Endothelial cell of umbilical vein (primary cell): ENCODE measurements at regions of chr22 and their contacts with region 1.

Region 1: DNA sequence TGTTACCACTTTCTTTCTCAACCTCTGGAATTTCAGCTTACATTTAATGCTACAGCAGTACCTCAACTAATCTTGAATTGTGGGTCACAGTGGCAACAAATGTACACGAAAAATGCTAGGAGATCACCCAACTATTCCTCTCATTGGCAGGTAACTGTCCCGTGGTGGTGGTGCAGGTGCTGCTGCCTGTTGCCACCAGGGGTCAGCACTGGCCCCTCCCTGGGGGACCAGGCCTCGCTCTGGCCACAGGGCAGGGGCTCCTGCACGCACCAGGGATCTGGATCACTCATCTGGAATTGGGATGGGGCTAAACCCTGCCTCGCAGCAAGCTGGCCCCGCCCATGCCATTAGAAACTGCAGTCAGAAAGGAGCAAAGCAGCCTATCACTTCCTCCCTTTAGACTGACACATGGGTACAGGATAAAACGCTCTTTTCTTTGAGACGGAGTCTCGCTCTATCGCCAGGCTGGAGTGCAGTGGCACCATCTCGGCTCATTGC is 6.9 kb upstream of the POLDIP3 start:
- DNase-seq: peak; percentile 51
- H3K4me3 ChIP-seq: no peak overlapping the region
- H3K27ac ChIP-seq: no peak overlapping the region
- H3K4me1 ChIP-seq: no peaks in the 10 kb centered on the region
- H3K27me3 ChIP-seq: no peaks in the 10 kb centered on the region
- CTCF ChIP-seq: peak; percentile 92 to 94
- POLR2A ChIP-seq: no peak

Region 2: DNA sequence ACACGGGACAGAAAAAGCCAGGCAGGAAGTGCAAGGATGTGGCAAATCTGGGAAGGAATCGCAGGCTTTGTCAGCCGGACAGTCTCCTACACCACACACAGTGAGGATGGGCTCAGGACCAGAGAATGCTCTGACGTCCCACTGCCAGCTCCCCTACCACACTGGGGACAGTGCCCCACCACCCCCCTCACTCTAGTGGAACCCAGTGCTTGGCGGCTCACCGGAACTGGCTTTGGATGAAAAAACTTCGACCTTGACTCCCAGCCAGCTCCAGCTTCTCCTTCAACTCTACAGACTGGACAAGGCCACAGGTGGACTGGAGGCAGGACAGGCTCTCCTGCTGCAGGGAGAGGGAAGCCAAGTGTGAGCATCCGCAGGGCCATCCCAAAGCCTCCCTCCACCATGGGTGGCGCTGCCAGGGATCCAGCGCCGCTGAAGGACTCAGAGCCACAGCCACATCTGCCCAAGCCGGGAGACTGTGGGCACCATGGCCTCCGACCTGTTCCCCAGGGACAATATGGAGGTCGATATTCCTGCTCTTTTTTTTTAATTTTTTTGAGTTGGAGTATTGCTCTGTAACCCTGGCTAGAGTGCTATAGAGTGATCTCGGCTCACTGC is 43.8 kb before region 1 on chr22:
- CTCF ChIA-PET with region 1: no interaction called
- POLR2A ChIA-PET with region 1: no interaction called
- dilution Hi-C with region 1: no loop called
- intact Hi-C with region 1: no loop called
- DNase-seq: no peak
- H3K4me3 ChIP-seq: no peak overlapping the region
- H3K27ac ChIP-seq: no peak overlapping the region
- H3K4me1 ChIP-seq: peaks cover 3% of the 10 kb centered on the region
- H3K27me3 ChIP-seq: no peaks in the 10 kb centered on the region
- CTCF ChIP-seq: no peak
- POLR2A ChIP-seq: no peak

Region 3: DNA sequence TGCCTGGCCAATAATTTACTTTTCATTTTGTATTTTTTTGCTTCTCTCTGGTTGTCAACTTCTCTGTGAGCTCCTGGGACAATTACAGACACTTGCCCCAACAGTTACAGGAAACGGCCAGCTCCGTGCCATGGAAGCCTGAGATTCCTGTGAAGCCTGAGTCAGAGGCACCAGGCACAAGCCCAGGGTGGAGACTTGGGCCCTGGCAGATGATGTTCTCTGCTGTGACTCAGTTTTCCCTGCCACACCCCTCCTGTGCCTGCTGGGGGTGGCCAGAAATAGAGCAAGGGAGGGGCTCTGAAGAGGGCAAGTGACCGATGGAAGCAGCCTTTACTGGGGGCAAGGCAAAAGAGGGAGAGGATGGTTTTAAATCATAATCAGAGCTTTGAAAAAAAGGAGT is 14.0 kb after region 1 on chr22:
- CTCF ChIA-PET with region 1: interaction called, 15 read pairs
- POLR2A ChIA-PET with region 1: no interaction called
- dilution Hi-C with region 1: no loop called
- intact Hi-C with region 1: no loop called
- DNase-seq: peak; percentile 87
- H3K4me3 ChIP-seq: no peak overlapping the region
- H3K27ac ChIP-seq: peak overlapping the region; percentile 74
- H3K4me1 ChIP-seq: peaks cover 12% of the 10 kb centered on the region
- H3K27me3 ChIP-seq: no peaks in the 10 kb centered on the region
- CTCF ChIP-seq: no peak
- POLR2A ChIP-seq: no peak

Region 4: GRCh38 chr22:42649246-42650099 is 27.9 kb after region 1 on chr22 and contains the start of gene CYB5R3:
- CTCF ChIA-PET with region 1: interaction called, 5 read pairs
- POLR2A ChIA-PET with region 1: no interaction called
- dilution Hi-C with region 1: no loop called
- intact Hi-C with region 1: loop called (anchors 1 kb)
- DNase-seq: peak; percentile 81
- H3K4me3 ChIP-seq: peak within 1 kb of the TSS; percentile 5 to 92 (median 42)
- H3K27ac ChIP-seq: peak within 1 kb of the TSS; percentile 75
- H3K4me1 ChIP-seq: peaks cover 37% of the 10 kb centered on the region
- H3K27me3 ChIP-seq: no peaks in the 10 kb centered on the region
- CTCF ChIP-seq: no peak
- POLR2A ChIP-seq: no peak
- total RNA-seq, gene CYB5R3: 217 and 232 TPM in 2 replicates

Region 5: GRCh38 chr22:42820066-42820763 is 198.7 kb after region 1 on chr22:
- CTCF ChIA-PET with region 1: interaction called, 40 read pairs
- POLR2A ChIA-PET with region 1: no interaction called
- dilution Hi-C with region 1: no loop called
- intact Hi-C with region 1: loop called (anchors 1 kb)
- DNase-seq: peak; percentile 63
- H3K4me3 ChIP-seq: no peak overlapping the region
- H3K27ac ChIP-seq: no peak overlapping the region
- H3K4me1 ChIP-seq: peaks cover 13% of the 10 kb centered on the region
- H3K27me3 ChIP-seq: no peaks in the 10 kb centered on the region
- CTCF ChIP-seq: peak; percentile 5 to 32
- POLR2A ChIP-seq: no peak